HCT116 (cell line): ENCODE measurements at regions of chr3 and their contacts with region 1.

Region 1: GRCh38 chr3:15797642-15798303 is at the start of gene ANKRD28:
- DNase-seq: peak; percentile 86
- ATAC-seq: peak; percentile 77
- H3K4me3 ChIP-seq: peak within 1 kb of the TSS; percentile 21 to 43
- H3K27ac ChIP-seq: peak within 1 kb of the TSS; percentile 92
- H3K4me1 ChIP-seq: peaks cover 58 to 68% of the 10 kb centered on the region in 2 experiments
- H3K27me3 ChIP-seq: no peaks in the 10 kb centered on the region
- CTCF ChIP-seq: no peak; a peak in 1 of 6 replicates
- POLR2A ChIP-seq: no peak
- RAD21 ChIP-seq: peak; percentile 15; the same call in 1 of the 2 replicates
- total RNA-seq, gene ANKRD28: 47.5 TPM

Region 2: GRCh38 chr3:15500107-15500724 is 297.6 kb before region 1 on chr3:
- CTCF ChIA-PET with region 1: no interaction called
- POLR2A ChIA-PET with region 1: no interaction called
- RAD21 ChIA-PET with region 1: no interaction called
- intact Hi-C with region 1: no loop called
- DNase-seq: no peak
- ATAC-seq: no peak
- H3K4me3 ChIP-seq: no peak overlapping the region
- H3K27ac ChIP-seq: no peak overlapping the region
- H3K4me1 ChIP-seq: no peaks in the 10 kb centered on the region
- H3K27me3 ChIP-seq: no peaks in the 10 kb centered on the region
- CTCF ChIP-seq: no peak
- POLR2A ChIP-seq: no peak
- RAD21 ChIP-seq: no peak

Region 3: DNA sequence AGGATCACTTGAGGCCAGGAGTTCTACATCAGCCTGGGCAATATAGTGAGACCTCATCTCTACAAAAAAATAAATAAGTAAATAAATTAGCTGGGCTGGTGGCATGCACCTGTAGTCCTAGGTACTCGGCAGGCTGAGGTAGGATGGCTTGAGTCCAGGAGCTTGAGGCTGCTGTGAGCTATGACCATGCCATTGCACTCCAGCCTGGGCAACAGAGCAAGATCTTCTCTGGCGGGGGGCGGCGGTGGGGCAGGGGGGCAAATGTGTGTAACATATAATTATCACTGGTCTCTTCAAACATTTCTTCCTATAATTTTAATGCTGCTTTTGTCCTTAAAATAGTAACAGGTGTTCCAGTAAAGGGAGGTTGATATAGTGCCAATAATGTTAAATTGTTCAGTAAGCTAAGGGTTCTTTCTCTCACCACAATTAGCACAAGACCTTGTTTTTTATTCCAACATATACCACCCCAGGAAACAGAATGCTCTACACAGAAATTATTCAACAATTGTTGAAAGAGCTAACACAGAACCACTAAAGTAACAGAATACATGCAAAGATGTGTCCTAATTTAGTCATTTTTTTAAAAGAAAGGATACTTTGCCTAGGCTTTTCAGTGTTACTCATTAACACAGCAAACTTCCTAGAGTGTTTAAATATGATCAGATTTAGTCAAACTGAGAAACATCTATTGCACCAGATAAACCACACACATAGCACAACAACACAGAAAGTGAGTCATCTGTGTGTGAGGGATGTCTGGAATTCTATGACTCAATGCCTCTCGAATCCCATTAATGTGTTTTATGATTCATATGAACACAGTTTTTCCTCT is 29.1 kb before region 1 on chr3:
- CTCF ChIA-PET with region 1: no interaction called
- POLR2A ChIA-PET with region 1: no interaction called
- RAD21 ChIA-PET with region 1: no interaction called
- intact Hi-C with region 1: loop called (anchors 2 kb)
- DNase-seq: peak; percentile 89
- ATAC-seq: peak; percentile 88
- H3K4me3 ChIP-seq: peak overlapping the region in 1 of 2 experiments; percentile 30; a peak in 2 of 4 replicates
- H3K27ac ChIP-seq: peak overlapping the region; percentile 68; the same call in 1 of the 2 replicates
- H3K4me1 ChIP-seq: peaks cover 26 to 30% of the 10 kb centered on the region in 2 experiments
- H3K27me3 ChIP-seq: no peaks in the 10 kb centered on the region
- CTCF ChIP-seq: no peak
- POLR2A ChIP-seq: no peak
- RAD21 ChIP-seq: 0 out of 2 replicates have a peak, but pooled peaks have one; percentile 11

Region 4: DNA sequence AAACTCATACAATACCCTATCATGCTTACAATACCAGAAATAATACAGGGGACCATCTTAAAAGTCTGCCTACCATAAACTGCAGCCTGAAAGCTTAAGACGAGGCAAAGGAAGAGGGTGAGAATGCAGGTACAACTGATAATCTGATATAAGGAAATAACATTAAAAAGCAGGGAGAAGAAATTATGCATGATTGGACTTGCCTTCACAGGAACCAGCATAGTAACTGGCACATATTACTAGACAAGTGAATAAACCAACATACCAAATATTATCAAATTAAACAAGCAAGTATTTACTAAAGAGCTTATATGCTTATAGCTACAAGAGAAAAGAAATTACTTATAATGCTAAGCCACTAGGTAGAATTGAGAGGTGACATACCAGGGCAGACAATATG is 18.7 kb before region 1 on chr3:
- CTCF ChIA-PET with region 1: no interaction called
- POLR2A ChIA-PET with region 1: no interaction called
- RAD21 ChIA-PET with region 1: no interaction called
- intact Hi-C with region 1: no loop called
- DNase-seq: no peak
- ATAC-seq: no peak
- H3K4me3 ChIP-seq: no peak overlapping the region
- H3K27ac ChIP-seq: no peak overlapping the region
- H3K4me1 ChIP-seq: peaks cover 2 to 16% of the 10 kb centered on the region in 2 experiments; a peak in 3 of 4 replicates
- H3K27me3 ChIP-seq: no peaks in the 10 kb centered on the region
- CTCF ChIP-seq: no peak
- POLR2A ChIP-seq: no peak
- RAD21 ChIP-seq: no peak

Region 5: GRCh38 chr3:16171009-16171408 is 373.2 kb after region 1 on chr3:
- CTCF ChIA-PET with region 1: no interaction called
- POLR2A ChIA-PET with region 1: no interaction called
- RAD21 ChIA-PET with region 1: no interaction called
- intact Hi-C with region 1: no loop called
- DNase-seq: no peak
- ATAC-seq: no peak
- H3K4me3 ChIP-seq: no peak overlapping the region
- H3K27ac ChIP-seq: no peak overlapping the region
- H3K4me1 ChIP-seq: no peaks in the 10 kb centered on the region
- H3K27me3 ChIP-seq: no peaks in the 10 kb centered on the region
- CTCF ChIP-seq: no peak
- POLR2A ChIP-seq: no peak
- RAD21 ChIP-seq: no peak